A673 (cell line): ENCODE measurements at regions of chr1 and their contacts with region 1.

Region 1: GRCh38 chr1:78114034-78114956 is 68.5 kb downstream of the GIPC2 start:
- DNase-seq: peak; percentile 82
- H3K4me3 ChIP-seq: no peak overlapping the region
- H3K27ac ChIP-seq: no peak overlapping the region
- H3K4me1 ChIP-seq: no peaks in the 10 kb centered on the region
- H3K27me3 ChIP-seq: no peaks in the 10 kb centered on the region
- CTCF ChIP-seq: peak; percentile 96

Region 2: GRCh38 chr1:76154206-76154956 is 1959.9 kb before region 1 on chr1:
- CTCF ChIA-PET with region 1: no interaction called
- POLR2A ChIA-PET with region 1: no interaction called
- intact Hi-C with region 1: loop called (anchors 10 kb)
- DNase-seq: peak; percentile 80
- H3K4me3 ChIP-seq: peak overlapping the region; percentile 29
- H3K27ac ChIP-seq: no peak overlapping the region
- H3K4me1 ChIP-seq: no peaks in the 10 kb centered on the region
- H3K27me3 ChIP-seq: no peaks in the 10 kb centered on the region
- CTCF ChIP-seq: peak; percentile 98

Region 3: DNA sequence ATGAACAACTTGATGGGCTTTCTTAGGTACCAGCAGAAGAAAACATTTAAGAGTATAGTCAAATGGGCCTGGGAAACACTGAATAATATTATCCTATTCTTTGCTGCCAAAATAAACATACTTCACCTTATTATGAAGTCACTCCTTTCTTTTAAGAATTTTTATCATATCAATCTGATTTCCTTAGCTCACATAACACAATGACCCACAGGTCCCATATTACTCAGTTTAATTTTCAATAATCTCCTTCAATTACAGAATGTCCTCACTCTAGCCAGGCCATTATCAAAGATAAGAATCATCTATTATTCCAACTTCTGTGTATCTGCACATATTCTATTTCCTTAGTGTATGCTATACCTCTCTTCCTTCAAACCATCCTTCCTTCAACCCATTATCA is 958.1 kb before region 1 on chr1:
- CTCF ChIA-PET with region 1: no interaction called
- POLR2A ChIA-PET with region 1: no interaction called
- intact Hi-C with region 1: loop called (anchors 5 kb)
- DNase-seq: no peak
- H3K4me3 ChIP-seq: no peak overlapping the region
- H3K27ac ChIP-seq: no peak overlapping the region
- H3K4me1 ChIP-seq: no peaks in the 10 kb centered on the region
- H3K27me3 ChIP-seq: no peaks in the 10 kb centered on the region
- CTCF ChIP-seq: no peak

Region 4: DNA sequence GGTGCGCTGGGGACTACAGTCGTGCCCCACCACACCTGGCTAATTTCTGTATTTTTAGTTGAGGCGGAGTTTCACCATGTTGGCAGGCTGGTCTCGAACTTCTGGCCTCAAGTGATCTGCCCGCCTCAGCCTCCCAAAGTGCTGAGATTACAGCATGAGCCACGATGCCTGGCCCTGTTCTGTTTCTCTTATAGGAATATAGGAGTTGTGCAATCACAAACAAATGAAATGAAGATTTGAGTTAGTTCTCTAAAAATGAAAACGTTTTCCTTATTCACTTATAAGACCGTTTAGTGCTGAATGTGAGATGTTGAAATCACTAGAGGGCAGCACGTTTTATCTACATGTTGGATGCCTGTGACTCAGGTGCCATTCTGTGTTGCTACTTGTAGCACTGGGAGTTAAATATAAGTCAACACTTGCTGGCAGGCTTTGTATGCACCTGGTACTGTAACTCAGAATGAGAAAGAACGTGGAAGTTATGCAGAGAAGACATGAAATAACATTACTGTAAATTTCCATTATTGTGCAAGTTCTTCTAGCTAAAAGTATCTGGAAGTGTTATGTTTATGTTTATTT is 289.1 kb before region 1 on chr1:
- CTCF ChIA-PET with region 1: no interaction called
- POLR2A ChIA-PET with region 1: no interaction called
- intact Hi-C with region 1: loop called (anchors 10 kb)
- DNase-seq: peak; percentile 54
- H3K4me3 ChIP-seq: no peak overlapping the region
- H3K27ac ChIP-seq: no peak overlapping the region
- H3K4me1 ChIP-seq: peaks cover 11% of the 10 kb centered on the region
- H3K27me3 ChIP-seq: no peaks in the 10 kb centered on the region
- CTCF ChIP-seq: peak; percentile 52

Region 5: DNA sequence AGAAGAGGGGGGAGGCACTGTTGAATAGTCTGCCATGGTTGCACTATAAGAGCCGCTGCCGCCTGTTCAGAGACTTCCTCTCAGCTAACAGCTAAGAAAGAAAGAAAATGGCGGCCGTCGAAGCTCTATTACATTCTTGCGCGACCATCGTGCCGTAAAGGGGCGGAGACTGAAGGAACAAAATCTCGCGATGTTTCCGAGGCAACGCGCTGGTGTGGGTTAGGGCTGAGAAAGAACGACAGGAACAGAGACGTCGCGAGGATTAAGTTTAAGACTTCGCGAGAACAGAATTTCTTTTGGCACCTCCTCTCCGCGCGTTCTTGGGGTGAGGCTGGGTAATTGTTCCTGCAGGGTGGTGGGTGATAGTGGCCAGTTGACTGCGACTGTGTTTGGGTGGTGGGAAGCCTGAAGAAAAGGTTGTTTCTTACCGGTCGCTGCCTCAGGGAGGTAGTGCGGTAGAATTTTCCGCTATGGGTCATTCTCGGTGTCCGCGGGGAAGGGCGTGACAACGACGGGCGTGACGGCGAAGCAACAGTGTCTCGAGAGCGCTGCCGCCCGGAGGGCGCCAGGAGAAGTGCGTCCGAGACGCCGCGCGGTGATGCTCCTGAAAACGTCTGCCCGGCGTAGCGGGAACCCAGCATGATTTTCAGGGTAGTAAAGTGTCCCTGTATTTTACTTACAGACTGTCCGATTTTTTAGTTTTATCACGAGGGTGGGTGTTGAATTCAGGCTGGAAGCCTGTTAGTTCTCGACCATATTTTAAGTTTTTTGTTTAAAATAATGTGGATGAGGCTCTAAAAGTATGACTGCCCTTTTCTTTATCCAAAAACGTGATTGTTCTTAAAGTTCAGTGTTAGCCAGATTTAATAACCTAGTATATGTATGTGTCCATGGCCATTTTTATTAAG is 135.1 kb before region 1 on chr1 and contains the start of gene FUBP1:
- CTCF ChIA-PET with region 1: interaction called, 4 read pairs
- POLR2A ChIA-PET with region 1: no interaction called
- intact Hi-C with region 1: loop called (anchors 1 kb)
- DNase-seq: peak; percentile 99
- H3K4me3 ChIP-seq: peak within 1 kb of the TSS; percentile 78
- H3K27ac ChIP-seq: peak within 1 kb of the TSS; percentile 96
- H3K4me1 ChIP-seq: peaks cover 39% of the 10 kb centered on the region
- H3K27me3 ChIP-seq: no peaks in the 10 kb centered on the region
- CTCF ChIP-seq: peak; percentile 78
- total RNA-seq, gene FUBP1: 195 and 213 TPM in 2 replicates

Region 6: DNA sequence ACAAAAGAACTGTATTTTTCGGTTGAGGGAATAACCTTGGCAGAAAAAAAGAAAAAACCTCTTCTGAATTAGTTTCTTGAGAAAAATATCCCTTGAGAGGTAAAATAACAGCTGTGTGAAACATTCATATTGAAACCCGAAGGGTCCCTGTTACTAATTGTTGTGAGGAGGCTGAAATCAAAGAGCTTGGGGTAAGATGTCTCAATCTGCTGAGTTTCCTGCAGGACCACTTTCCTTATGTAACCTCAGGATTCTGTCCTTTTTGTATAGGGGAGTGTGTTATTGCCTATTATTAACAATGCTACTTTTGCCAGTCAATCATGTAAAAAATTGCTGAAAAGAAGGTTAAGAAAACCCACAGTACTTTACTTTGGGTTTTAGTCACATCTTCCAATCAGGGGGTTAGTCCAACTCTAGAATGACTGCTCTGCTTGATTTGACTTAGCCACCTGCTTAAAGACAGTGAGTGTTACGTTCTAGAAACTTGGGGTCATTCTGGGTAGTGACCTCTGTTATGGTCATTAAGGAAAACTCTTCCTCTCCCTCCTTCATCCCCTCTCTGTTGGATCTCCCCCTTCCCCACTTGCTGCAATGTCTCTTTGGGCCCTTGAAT is 70.3 kb after region 1 on chr1:
- CTCF ChIA-PET with region 1: no interaction called
- POLR2A ChIA-PET with region 1: no interaction called
- intact Hi-C with region 1: no loop called
- DNase-seq: no peak
- H3K4me3 ChIP-seq: no peak overlapping the region
- H3K27ac ChIP-seq: no peak overlapping the region
- H3K4me1 ChIP-seq: no peaks in the 10 kb centered on the region
- H3K27me3 ChIP-seq: no peaks in the 10 kb centered on the region
- CTCF ChIP-seq: no peak

Region 7: DNA sequence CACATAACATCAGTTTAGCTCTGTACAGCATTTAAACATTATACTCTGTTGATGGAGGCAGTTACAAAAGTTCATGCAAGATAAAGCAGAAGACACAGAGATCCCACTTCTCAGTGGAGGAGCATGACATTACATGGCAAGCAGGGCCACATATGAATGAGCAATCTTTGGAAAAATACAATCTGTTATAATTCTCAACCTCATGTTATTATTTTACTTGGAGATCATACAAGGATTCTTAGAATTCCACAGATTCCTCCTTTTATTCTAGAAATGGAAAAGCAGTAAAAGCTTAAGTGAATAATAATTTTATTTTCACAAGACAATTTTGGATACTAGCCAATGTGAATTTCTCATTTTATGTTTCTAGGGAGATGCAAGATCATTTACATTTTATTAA is 601.9 kb after region 1 on chr1:
- CTCF ChIA-PET with region 1: no interaction called
- POLR2A ChIA-PET with region 1: no interaction called
- intact Hi-C with region 1: no loop called
- DNase-seq: peak; percentile 6
- H3K4me3 ChIP-seq: no peak overlapping the region
- H3K27ac ChIP-seq: peak overlapping the region; percentile 3
- H3K4me1 ChIP-seq: no peaks in the 10 kb centered on the region
- H3K27me3 ChIP-seq: no peaks in the 10 kb centered on the region
- CTCF ChIP-seq: no peak